ENCODE measurements at regions of chr4 and their contacts with region 1.

Region 1: GRCh38 chr4:26410385-26411293 is 79.6 kb downstream of the CCKAR start:
- DNase-seq: peak; percentile 40
- H3K4me3 ChIP-seq: no peak overlapping the region
- H3K27ac ChIP-seq: no peak overlapping the region
- H3K4me1 ChIP-seq: no peaks in the 10 kb centered on the region
- H3K27me3 ChIP-seq: no peaks in the 10 kb centered on the region
- CTCF ChIP-seq: peak; percentile 80
- EP300 ChIP-seq: no peak
- RAD21 ChIP-seq: peak; percentile 86

Region 2: DNA sequence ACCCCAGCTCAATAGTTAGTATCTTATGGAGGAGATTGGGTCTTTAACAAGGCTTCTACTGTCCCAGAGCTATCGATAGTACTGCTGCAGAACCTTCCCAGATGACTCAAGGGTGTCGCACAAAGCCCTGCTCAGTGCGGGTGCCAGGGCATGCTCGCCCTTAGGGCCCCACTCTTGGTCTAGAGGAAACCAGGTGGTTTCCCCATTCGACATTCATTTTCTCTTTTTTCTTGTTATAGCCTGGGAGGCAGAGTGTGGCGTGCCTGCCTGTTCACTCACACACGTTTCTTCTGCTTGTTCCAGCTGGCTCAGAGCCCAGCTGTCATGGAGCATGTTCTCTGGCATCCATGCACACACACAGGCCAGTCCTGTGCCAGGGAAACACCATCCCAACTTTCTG is 352.1 kb before region 1 on chr4:
- CTCF ChIA-PET with region 1: interaction called, 12 read pairs
- POLR2A ChIA-PET with region 1: no interaction called
- DNase-seq: peak; percentile 69
- H3K4me3 ChIP-seq: no peak overlapping the region
- H3K27ac ChIP-seq: no peak overlapping the region
- H3K4me1 ChIP-seq: peaks cover 0 to 5% of the 10 kb centered on the region in 2 experiments; a peak in 1 of 4 replicates
- H3K27me3 ChIP-seq: no peaks in the 10 kb centered on the region; the same call in 1 of the 2 replicates
- CTCF ChIP-seq: no peak
- EP300 ChIP-seq: no peak
- RAD21 ChIP-seq: no peak

Region 3: DNA sequence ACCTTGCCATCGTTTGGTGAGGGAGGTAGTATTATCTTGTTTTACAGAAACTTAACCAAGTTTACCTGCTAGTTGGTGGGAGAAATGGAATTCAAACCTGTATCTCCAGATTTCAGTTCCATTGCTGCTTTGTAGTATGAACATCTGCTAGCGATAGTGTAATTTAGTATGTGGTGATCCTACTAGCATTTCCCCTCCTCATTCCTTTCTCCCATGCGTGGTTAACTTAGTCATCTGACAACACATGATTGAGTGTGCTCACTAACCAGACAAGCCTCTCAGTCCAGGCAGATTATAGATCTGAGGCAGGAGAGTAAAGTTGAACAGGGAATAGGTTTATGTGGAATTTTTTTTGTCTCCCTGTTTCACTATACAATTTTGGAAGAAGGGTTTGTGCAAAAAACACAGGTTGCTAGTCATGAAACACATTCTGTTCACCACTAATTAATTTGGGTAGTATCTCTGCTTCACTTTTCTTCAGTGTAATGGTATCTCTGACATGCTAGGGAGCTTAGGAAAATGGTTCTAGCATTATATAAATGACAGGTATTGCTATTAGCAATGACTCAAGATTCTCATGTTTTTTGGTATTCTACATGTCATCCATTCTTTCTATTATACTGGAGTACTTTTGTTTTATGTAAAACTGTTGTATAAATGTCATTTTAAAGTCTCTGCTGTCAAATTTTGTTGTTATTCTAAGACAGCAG is 68.2 kb before region 1 on chr4:
- CTCF ChIA-PET with region 1: interaction called, 13 read pairs
- POLR2A ChIA-PET with region 1: no interaction called
- DNase-seq: no peak
- H3K4me3 ChIP-seq: no peak overlapping the region; a peak in 1 of 4 replicates
- H3K27ac ChIP-seq: peak overlapping the region in 1 of 2 experiments; percentile 66; a peak in 2 of 4 replicates
- H3K4me1 ChIP-seq: peaks cover 0 to 23% of the 10 kb centered on the region in 2 experiments; a peak in 3 of 4 replicates
- H3K27me3 ChIP-seq: no peaks in the 10 kb centered on the region
- CTCF ChIP-seq: no peak
- EP300 ChIP-seq: peak in 1 of 2 experiments; percentile 77; a peak in 2 of 4 replicates
- RAD21 ChIP-seq: no peak

Region 4: DNA sequence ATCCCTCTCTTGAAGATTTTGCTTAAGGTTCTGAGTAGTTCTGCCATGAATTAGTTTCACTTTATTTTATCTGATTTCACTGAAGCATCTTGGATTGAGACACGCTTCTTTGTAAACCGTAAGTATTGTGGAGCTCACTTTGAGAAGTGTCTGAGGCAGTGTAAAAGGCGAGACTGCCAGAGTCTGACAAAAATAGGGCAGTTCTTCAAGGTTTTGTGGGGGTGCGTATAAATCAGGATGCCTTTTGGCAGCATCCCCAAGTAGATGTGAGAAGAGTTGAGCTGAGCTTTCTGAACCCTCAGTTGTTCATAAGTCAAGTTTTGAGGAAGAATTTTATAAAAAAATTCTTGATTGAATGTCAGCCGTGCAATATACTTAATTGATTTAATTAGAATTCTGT is 13.6 kb before region 1 on chr4:
- CTCF ChIA-PET with region 1: interaction called, 15 read pairs
- POLR2A ChIA-PET with region 1: no interaction called
- DNase-seq: no peak
- H3K4me3 ChIP-seq: no peak overlapping the region
- H3K27ac ChIP-seq: no peak overlapping the region
- H3K4me1 ChIP-seq: no peaks in the 10 kb centered on the region
- H3K27me3 ChIP-seq: no peaks in the 10 kb centered on the region
- CTCF ChIP-seq: no peak
- EP300 ChIP-seq: no peak
- RAD21 ChIP-seq: no peak

Region 5: GRCh38 chr4:26509681-26510333 is 99.2 kb after region 1 on chr4:
- CTCF ChIA-PET with region 1: no interaction called
- POLR2A ChIA-PET with region 1: no interaction called
- DNase-seq: no peak
- H3K4me3 ChIP-seq: no peak overlapping the region
- H3K27ac ChIP-seq: no peak overlapping the region
- H3K4me1 ChIP-seq: no peaks in the 10 kb centered on the region
- H3K27me3 ChIP-seq: no peaks in the 10 kb centered on the region
- CTCF ChIP-seq: no peak
- EP300 ChIP-seq: no peak
- RAD21 ChIP-seq: no peak

Region 6: GRCh38 chr4:26719954-26720552 is 309.4 kb after region 1 on chr4:
- CTCF ChIA-PET with region 1: interaction called, 11 read pairs
- POLR2A ChIA-PET with region 1: no interaction called
- DNase-seq: peak; percentile 12
- H3K4me3 ChIP-seq: no peak overlapping the region; a peak in 1 of 4 replicates
- H3K27ac ChIP-seq: no peak overlapping the region
- H3K4me1 ChIP-seq: no peaks in the 10 kb centered on the region
- H3K27me3 ChIP-seq: no peaks in the 10 kb centered on the region
- CTCF ChIP-seq: peak; percentile 91
- EP300 ChIP-seq: no peak
- RAD21 ChIP-seq: peak; percentile 83